Right ventricle myocardium inferior (tissue), 1 donor: ENCODE measurements at regions of chr3 and their contacts with region 1.

Region 1: GRCh38 chr3:20511863-20512505 is 326.0 kb upstream of the SGO1 start:
- DNase-seq: no peak
- ATAC-seq: peak; percentile 62

Region 2: GRCh38 chr3:20462723-20463122 is 49.3 kb before region 1 on chr3:
- intact Hi-C with region 1: no loop called
- DNase-seq: no peak
- ATAC-seq: no peak

Region 3: GRCh38 chr3:20739814-20740213 is 227.8 kb after region 1 on chr3:
- intact Hi-C with region 1: loop called (anchors 1 kb)
- DNase-seq: no peak
- ATAC-seq: peak; percentile 50

Region 4: DNA sequence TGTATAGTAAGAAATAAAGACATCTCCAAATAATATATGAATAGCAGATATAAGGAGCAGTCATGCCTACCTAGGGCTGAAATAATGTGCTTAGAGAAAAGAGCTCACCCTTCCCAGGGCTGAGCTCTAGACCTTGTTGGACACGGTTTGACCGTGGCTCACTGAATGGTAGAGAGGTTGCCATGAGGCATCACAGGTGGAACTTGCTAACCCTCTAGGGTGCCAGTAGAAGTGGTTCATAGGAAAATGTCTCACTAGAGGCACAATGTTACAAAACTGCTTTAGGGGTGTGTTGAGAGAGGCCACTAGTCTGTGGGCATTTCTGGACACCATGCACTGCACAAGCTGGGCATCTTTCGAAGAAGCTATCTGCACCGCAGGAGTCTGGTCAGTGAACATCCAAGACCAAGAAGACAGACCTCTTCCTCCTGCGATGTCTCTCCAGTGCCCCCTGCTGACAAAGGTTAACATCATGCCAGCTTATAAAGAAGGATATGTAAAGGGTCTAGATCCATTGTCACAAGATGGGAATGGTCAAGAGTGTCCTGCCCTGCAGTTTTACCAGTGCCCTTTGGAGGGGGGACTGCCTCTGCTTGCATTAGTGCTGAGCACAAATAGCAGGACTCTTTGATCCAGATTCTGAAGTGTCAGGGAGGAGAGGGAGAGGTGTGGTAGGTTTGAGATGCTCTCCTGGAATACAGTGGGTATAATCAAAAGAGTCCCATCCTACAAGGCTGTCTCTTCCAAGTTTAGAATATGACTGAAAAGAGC is 972.3 kb after region 1 on chr3:
- intact Hi-C with region 1: loop called (anchors 10 kb)
- DNase-seq: no peak
- ATAC-seq: peak; percentile 44

Region 5: GRCh38 chr3:22117751-22118346 is 1605.9 kb after region 1 on chr3:
- intact Hi-C with region 1: loop called (anchors 5 kb)
- DNase-seq: no peak
- ATAC-seq: no peak